ENCODE measurements at regions of chr19 and their contacts with region 1.

Region 1: DNA sequence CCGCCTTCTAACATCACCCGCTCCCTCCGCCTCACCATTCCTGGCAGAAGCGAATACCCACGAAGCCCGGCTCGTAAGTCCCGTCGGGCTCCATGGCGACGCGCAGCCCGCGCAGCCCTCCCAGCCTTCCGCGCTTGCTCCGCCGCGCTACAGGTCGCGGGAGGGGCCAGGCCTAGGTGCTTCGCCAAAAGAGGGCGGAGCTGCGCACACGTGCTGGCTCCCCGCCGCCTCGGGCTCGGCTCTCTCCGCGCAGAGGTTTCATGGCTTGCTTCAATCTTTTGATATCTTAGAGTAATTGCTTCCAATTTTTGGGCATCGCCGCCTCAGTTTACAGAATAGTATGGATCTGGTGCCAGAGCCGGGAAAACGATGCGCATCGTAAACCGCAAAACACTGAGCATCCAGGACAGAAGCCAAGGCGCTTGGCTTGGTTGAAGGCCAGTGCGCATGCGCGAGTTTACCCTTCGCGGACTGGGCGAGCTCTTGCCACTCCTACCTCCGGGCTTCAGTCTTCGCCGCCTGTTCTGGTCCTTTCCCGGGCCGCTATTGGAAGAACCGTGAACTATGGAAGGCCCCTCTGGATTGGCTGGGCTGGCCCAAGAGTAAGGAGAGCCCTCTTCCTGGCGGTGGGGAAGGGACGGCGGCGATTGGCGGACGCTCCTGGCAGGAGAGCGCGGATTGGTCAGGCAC is at the start of gene POLR2I:
- DNase-seq: peak; percentile 99
- ATAC-seq: peak; percentile 92
- H3K4me3 ChIP-seq: peak within 1 kb of the TSS; percentile 82 to 99
- H3K27ac ChIP-seq: peak within 1 kb of the TSS; percentile 92
- H3K4me1 ChIP-seq: peaks cover 7 to 27% of the 10 kb centered on the region in 2 experiments; a peak in 3 of 4 replicates
- H3K27me3 ChIP-seq: no peaks in the 10 kb centered on the region
- CTCF ChIP-seq: no peak
- POLR2A ChIP-seq: peak; percentile 90
- RAD21 ChIP-seq: no peak
- total RNA-seq, gene POLR2I: 108 TPM

Region 2: DNA sequence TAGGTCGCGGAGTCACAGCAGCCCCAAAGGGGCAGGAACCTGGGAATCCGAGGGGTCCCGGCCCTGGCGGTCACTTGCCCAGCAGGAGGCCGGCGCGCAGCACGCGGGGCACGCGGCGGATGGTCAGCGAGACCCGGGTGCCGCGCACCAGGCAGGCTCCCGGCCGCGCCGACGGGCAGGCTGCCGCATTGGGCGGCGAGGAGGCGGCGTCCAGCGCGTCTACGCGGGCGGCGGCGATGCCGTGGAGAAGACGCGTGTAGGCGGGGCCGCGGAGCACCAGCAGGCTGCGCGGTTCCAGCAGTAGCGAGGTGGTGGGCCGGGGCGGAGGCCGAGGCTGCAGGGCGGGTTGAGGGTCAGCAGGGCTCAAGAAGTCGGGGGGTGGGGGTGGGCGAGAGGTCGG is 105.7 kb before region 1 on chr19:
- CTCF ChIA-PET with region 1: no interaction called
- POLR2A ChIA-PET with region 1: no interaction called
- RAD21 ChIA-PET with region 1: interaction called in 1 of 2 experiments, 3 read pairs
- intact Hi-C with region 1: loop called (anchors 10 kb)
- DNase-seq: no peak
- ATAC-seq: peak; percentile 67
- H3K4me3 ChIP-seq: peak overlapping the region; percentile 89 to 98
- H3K27ac ChIP-seq: peak overlapping the region; percentile 87
- H3K4me1 ChIP-seq: peaks cover 12 to 37% of the 10 kb centered on the region in 2 experiments; a peak in 3 of 4 replicates
- H3K27me3 ChIP-seq: no peaks in the 10 kb centered on the region
- CTCF ChIP-seq: no peak
- POLR2A ChIP-seq: peak; percentile 80
- RAD21 ChIP-seq: no peak

Region 3: DNA sequence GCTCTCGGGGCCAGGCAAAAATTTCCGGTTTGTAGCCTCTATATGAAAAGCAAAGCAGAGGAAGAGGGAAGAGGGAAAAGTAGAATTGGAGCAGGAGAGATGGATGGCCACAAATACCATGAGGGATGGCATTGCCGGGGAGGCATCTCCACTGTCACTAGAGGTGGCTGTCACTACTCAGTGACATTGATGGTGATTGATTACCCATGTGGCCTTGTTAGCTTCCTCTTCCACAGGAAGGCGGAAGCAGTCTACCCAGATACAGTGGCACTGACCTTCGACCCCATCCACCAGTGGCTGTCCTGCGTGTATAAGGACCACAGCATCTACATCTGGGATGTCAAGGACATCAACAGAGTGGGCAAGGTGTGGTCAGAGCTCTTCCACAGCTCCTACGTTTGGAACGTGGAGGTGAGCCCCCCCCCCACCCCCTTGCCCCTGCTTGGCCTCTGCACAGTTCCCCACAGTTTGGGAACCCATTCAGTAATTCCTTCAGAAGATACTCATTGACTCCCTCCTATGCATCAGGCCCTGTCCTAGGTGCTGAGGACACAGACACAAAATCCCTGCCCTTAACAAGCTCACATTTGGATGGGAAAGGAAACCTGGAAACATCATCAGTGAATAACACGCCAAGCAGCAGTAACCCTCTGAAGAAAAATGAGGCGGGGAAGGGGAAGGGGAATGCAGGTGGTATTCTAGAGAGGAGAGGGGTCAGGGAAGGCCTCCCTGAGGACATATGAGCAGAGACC is 41.6 kb before region 1 on chr19:
- CTCF ChIA-PET with region 1: no interaction called
- POLR2A ChIA-PET with region 1: no interaction called
- RAD21 ChIA-PET with region 1: no interaction called
- intact Hi-C with region 1: loop called (anchors 5 kb)
- DNase-seq: no peak
- ATAC-seq: no peak
- H3K4me3 ChIP-seq: no peak overlapping the region
- H3K27ac ChIP-seq: no peak overlapping the region
- H3K4me1 ChIP-seq: peaks cover 14 to 17% of the 10 kb centered on the region in 2 experiments
- H3K27me3 ChIP-seq: no peaks in the 10 kb centered on the region
- CTCF ChIP-seq: no peak
- POLR2A ChIP-seq: no peak
- RAD21 ChIP-seq: no peak

Region 4: DNA sequence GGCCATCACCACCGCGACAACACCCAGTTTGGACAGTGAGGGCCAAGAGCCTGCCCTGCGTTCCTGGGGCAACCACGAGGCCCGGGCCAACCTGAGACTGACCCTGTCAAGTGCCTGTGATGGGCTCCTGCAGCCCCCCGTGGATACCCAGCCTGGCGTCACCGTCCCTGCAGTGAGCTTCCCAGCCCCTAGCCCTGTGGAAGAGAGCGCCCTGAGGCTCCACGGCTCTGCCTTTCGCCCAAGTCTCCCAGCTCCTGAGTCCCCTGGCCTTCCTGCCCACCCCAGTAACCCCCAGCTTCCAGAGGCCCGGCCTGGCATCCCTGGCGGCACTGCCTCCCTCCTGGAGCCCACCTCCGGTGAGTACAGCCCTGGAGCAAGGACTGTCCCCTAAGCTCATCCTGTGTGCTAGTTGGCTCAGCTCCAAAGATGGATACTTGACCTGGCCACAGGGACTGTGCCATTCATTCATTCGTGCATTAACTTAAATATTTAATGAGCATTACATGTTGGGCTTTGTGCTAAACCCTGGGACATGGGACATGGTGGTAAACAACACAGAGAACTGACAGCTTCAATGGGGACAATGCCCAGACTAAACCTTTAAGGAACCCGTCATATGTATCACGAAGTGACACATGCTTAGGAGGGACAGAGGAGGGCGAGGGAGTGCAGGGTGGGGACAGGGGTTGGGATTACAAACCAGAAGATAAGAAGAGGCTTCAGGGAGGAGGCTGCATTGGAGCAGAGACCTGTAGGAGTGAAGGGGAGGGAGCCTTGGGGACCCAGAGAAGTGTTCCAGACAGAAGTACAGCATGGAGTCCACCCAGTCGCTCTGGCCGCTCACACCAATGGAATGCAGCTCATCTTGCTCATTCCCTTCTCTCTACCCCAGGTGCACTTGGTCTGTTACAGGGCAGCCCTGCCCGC is 11.0 kb before region 1 on chr19:
- CTCF ChIA-PET with region 1: no interaction called
- POLR2A ChIA-PET with region 1: no interaction called
- RAD21 ChIA-PET with region 1: no interaction called
- intact Hi-C with region 1: no loop called
- DNase-seq: no peak
- ATAC-seq: peak; percentile 61
- H3K4me3 ChIP-seq: no peak overlapping the region
- H3K27ac ChIP-seq: no peak overlapping the region
- H3K4me1 ChIP-seq: peaks cover 0 to 21% of the 10 kb centered on the region in 2 experiments; a peak in 2 of 4 replicates
- H3K27me3 ChIP-seq: no peaks in the 10 kb centered on the region
- CTCF ChIP-seq: no peak
- POLR2A ChIP-seq: no peak
- RAD21 ChIP-seq: no peak

Region 5: DNA sequence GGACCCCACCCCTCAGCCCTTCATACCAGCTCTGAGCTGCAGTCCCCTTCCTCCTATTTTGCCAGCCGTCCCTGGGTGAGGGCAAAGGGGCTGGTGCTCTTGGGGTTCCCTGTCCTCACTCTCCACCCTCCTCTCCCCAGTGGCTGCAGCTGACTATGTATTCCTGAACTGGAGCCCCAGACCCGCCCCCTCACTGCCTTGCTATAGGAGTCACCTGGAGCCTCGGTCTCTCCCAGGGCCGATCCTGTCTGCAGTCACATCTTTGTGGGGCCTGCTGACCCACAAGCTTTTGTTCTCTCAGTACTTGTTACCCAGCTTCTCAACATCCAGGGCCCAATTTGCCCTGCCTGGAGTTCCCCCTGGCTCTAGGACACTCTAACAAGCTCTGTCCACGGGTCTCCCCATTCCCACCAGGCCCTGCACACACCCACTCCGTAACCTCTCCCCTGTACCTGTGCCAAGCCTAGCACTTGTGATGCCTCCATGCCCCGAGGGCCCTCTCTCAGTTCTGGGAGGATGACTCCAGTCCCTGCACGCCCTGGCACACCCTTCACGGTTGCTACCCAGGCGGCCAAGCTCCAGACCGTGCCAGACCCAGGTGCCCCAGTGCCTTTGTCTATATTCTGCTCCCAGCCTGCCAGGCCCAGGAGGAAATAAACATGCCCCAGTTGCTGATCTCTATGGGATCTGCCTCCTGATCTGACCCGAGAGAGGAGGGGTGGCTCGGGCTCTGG is 34.9 kb after region 1 on chr19:
- CTCF ChIA-PET with region 1: no interaction called
- POLR2A ChIA-PET with region 1: no interaction called
- RAD21 ChIA-PET with region 1: no interaction called
- intact Hi-C with region 1: no loop called
- DNase-seq: no peak
- ATAC-seq: no peak
- H3K4me3 ChIP-seq: no peak overlapping the region
- H3K27ac ChIP-seq: no peak overlapping the region
- H3K4me1 ChIP-seq: no peaks in the 10 kb centered on the region
- H3K27me3 ChIP-seq: no peaks in the 10 kb centered on the region
- CTCF ChIP-seq: no peak
- POLR2A ChIP-seq: no peak
- RAD21 ChIP-seq: no peak